HEK293 (cell line): ENCODE measurements at regions of chr6 and their contacts with region 1.

Region 1: GRCh38 chr6:137866914-137867684 is at the start of gene TNFAIP3:
- H3K4me3 ChIP-seq: peak within 1 kb of the TSS; percentile 67
- H3K27ac ChIP-seq: peak within 1 kb of the TSS; percentile 60; the same call in 1 of the 2 replicates
- H3K4me1 ChIP-seq: peaks cover 16% of the 10 kb centered on the region
- CTCF ChIP-seq: peak; percentile 68

Region 2: DNA sequence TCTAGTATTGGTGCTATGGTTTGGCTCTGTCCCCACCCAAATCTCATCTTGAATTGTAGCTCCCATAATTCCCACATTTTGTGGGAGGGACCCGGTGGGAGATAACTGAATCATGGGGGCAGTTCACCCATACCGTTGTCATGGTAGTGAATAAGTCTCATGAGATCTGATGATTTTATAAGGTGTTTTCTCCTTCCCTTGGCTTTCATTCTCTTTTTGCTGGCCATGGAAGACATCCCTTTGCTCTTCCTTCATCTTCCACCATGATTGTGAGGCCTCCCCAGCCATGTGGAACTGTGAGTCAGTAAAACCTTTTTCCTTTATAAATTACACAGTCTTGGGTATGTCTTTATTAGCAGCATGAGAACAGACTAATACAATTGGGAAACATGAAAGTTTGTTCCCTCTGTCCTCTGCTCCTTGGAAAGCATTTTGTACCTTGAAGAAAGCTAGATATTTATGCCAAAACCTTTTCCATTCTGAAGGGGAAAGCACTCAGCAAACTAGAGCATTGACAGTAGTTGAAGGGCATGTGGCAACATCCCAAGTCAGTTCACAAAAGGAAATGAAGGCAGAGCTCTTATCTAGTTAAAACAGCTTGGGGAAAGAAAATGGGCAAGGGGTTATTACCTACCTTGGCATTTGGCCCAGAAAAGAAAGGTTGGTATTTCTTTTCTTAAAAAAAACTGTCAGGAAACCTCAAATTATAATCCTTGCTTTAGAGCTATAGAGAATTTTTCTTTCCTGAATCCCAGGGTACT is 10.8 kb before region 1 on chr6:
- CTCF ChIA-PET with region 1: interaction called, 10 read pairs
- POLR2A ChIA-PET with region 1: no interaction called
- H3K4me3 ChIP-seq: no peak overlapping the region
- H3K27ac ChIP-seq: no peak overlapping the region
- H3K4me1 ChIP-seq: peaks cover 5% of the 10 kb centered on the region; the same call in 1 of the 2 replicates
- CTCF ChIP-seq: no peak

Region 3: GRCh38 chr6:137878486-137879285 is 11.6 kb after region 1 on chr6:
- CTCF ChIA-PET with region 1: interaction called, 11 read pairs
- POLR2A ChIA-PET with region 1: no interaction called
- H3K4me3 ChIP-seq: no peak overlapping the region
- H3K27ac ChIP-seq: no peak overlapping the region
- H3K4me1 ChIP-seq: no peaks in the 10 kb centered on the region
- CTCF ChIP-seq: no peak

Region 4: GRCh38 chr6:138387597-138388368 is 520.7 kb after region 1 on chr6:
- CTCF ChIA-PET with region 1: no interaction called
- POLR2A ChIA-PET with region 1: no interaction called
- H3K4me3 ChIP-seq: no peak overlapping the region
- H3K27ac ChIP-seq: no peak overlapping the region
- H3K4me1 ChIP-seq: no peaks in the 10 kb centered on the region
- CTCF ChIP-seq: no peak